ENCODE measurements at regions of chr18 and their contacts with region 1.

Region 1: GRCh38 chr18:63848159-63848558 is 39.3 kb upstream of the SERPINB2 start:
- DNase-seq: no peak
- H3K4me3 ChIP-seq: no peak overlapping the region
- H3K27ac ChIP-seq: no peak overlapping the region
- H3K4me1 ChIP-seq: no peaks in the 10 kb centered on the region
- H3K27me3 ChIP-seq: no peaks in the 10 kb centered on the region
- CTCF ChIP-seq: peak in 2 of 3 experiments; percentile 63 to 70; a peak in 3 of 4 replicates
- EP300 ChIP-seq: no peak
- POLR2A ChIP-seq: no peak
- RAD21 ChIP-seq: peak; percentile 75 to 79

Region 2: DNA sequence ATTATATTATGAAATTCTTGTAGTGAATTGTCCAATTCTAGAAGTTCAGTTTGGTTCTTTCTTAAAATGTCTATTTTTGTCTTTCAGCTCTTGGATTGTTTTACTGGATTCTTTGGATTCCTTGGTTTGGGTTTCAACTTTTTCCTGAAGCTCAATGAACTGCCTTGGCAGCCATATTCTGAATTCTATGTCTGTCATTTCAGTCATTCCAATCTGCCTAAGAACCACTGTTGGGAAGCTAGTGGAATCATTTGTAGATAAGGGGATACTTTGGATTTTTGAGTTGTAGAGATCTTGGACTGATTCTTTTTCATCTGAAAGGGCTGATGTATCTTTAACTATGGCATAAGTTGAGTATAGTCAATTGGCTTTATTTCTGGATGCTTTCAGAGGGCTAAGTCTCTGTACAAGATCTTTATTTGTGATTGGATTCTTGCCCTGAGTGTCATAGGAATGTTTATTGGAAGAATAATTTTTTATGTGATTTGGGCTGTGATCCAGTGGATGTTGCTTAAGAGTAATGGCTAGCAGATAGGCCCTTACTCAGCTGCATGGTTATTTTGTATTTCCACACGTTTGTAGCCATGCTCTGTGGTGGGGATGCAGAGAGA is 30.6 kb before region 1 on chr18:
- CTCF ChIA-PET with region 1: interaction called, 21 read pairs
- POLR2A ChIA-PET with region 1: no interaction called
- DNase-seq: no peak
- H3K4me3 ChIP-seq: no peak overlapping the region
- H3K27ac ChIP-seq: no peak overlapping the region
- H3K4me1 ChIP-seq: no peaks in the 10 kb centered on the region
- H3K27me3 ChIP-seq: no peaks in the 10 kb centered on the region
- CTCF ChIP-seq: no peak
- EP300 ChIP-seq: no peak
- POLR2A ChIP-seq: no peak
- RAD21 ChIP-seq: no peak

Region 3: GRCh38 chr18:63823518-63824219 is 24.5 kb before region 1 on chr18:
- CTCF ChIA-PET with region 1: interaction called, 21 read pairs
- POLR2A ChIA-PET with region 1: no interaction called
- DNase-seq: peak in 1 of 2 experiments; percentile 58
- H3K4me3 ChIP-seq: no peak overlapping the region
- H3K27ac ChIP-seq: no peak overlapping the region
- H3K4me1 ChIP-seq: no peaks in the 10 kb centered on the region
- H3K27me3 ChIP-seq: no peaks in the 10 kb centered on the region
- CTCF ChIP-seq: peak in 2 of 3 experiments; percentile 44 to 59; a peak in 3 of 4 replicates
- EP300 ChIP-seq: no peak
- POLR2A ChIP-seq: no peak
- RAD21 ChIP-seq: peak; percentile 39 to 50; a peak in 3 of 4 replicates

Measured in H1 (cell line).